Sigmoid colon (tissue), 7 donors: ENCODE measurements at regions of chr11 and their contacts with region 1.

Region 1: DNA sequence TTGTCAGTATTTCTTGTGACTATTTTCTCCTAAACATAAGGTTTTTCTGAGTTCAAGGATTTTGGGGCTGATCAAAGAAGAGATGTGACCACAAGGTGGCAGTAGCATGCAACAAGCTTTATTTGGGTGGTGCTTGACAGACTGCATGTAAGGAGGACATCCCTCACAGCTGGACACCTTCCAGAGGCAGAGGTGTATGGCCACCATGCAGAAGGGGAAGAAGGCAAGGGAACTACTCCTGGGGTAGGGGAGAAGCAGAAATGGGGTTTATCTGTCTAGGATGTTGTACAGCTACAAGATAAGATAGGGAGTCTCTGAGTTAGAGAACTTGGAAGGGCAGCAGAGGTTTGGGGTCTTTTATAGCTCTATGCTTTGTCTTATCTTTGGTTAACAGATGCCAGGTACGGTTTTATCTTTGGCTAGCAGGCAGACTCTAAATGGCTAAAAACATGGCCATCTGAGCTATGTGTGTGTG is 5.1 kb upstream of the BIRC2 start:
- DNase-seq: peak; percentile 89
- H3K4me3 ChIP-seq: no peak overlapping the region
- H3K27ac ChIP-seq: no peak overlapping the region
- H3K4me1 ChIP-seq: peaks cover 0 to 10% (median 8%) of the 10 kb centered on the region in 4 donors
- H3K27me3 ChIP-seq: no peaks in the 10 kb centered on the region
- CTCF ChIP-seq: peak; percentile 72 to 83 (median 80)
- EP300 ChIP-seq: no peak
- POLR2A ChIP-seq: no peak

Region 2: GRCh38 chr11:102614485-102614884 is 272.6 kb after region 1 on chr11:
- intact Hi-C with region 1: loop called (anchors 2 kb)
- DNase-seq: no peak
- H3K4me3 ChIP-seq: no peak overlapping the region
- H3K27ac ChIP-seq: no peak overlapping the region
- H3K4me1 ChIP-seq: peaks cover 0 to 6% (median 0%) of the 10 kb centered on the region in 4 donors
- H3K27me3 ChIP-seq: no peaks in the 10 kb centered on the region
- CTCF ChIP-seq: no peak
- EP300 ChIP-seq: no peak
- POLR2A ChIP-seq: no peak

Region 3: GRCh38 chr11:102666331-102666957 is 324.6 kb after region 1 on chr11:
- intact Hi-C with region 1: loop called (anchors 5 kb)
- DNase-seq: no peak
- H3K4me3 ChIP-seq: no peak overlapping the region
- H3K27ac ChIP-seq: no peak overlapping the region
- H3K4me1 ChIP-seq: peaks cover 0 to 7% (median 3%) of the 10 kb centered on the region in 4 donors
- H3K27me3 ChIP-seq: no peaks in the 10 kb centered on the region
- CTCF ChIP-seq: peak; percentile 60 to 77 (median 70)
- EP300 ChIP-seq: no peak
- POLR2A ChIP-seq: no peak